Prostate gland (tissue), 2 donors: ENCODE measurements at regions of chr1 and their contacts with region 1.

Region 1: DNA sequence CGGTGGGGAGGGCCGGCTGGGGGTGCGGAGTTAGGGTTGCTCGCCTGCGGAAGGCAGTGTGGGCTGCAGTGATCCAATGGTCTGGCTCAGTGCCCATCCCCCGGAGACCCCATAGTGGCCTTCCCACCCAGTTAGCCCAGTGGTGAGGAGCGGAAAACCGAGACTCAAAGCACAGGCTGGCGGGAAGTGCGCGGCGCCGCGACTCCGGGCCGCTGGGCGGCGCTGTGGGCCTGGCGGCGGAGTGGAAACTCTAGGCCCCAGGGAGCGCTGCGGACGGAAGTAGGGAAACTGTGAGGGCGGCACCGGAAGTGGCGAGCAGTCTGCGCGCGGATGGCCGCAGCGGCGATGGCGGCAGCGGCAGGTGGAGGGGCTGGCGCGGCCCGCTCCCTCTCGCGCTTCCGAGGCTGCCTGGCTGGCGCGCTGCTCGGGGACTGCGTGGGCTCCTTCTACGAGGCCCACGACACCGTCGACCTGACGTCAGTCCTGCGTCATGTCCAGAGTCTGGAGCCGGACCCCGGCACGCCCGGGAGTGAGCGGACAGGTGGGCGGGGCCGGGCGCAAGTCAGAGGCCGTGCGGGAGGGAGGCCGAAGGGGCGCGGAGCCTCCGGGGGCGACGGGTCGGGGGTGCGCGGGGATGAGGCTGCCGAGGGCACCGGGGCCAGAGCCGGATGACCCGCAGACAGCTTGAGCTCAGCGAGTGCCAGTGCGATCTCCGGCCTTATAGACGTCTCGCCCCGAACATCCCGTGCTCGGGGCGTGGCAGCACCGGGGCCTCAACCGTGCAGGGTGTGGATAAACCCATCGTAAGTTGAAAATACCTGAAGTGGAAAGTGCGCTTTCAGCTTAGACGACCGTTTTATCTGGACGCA is at the start of gene ADPRS:
- DNase-seq: peak; percentile 84
- H3K4me3 ChIP-seq: peak within 1 kb of the TSS; percentile 57 to 89
- H3K27ac ChIP-seq: peak within 1 kb of the TSS; percentile 72 to 90
- H3K4me1 ChIP-seq: peaks cover 12% of the 10 kb centered on the region
- H3K27me3 ChIP-seq: no peaks in the 10 kb centered on the region
- CTCF ChIP-seq: peak; percentile 93 to 99 (median 99)
- POLR2A ChIP-seq: peak; percentile 84
- total RNA-seq, gene ADPRS: 50.7 to 70.0 TPM

Region 2: GRCh38 chr1:35882945-35883634 is 205.7 kb before region 1 on chr1 and contains the start of gene AGO1:
- intact Hi-C with region 1: loop called (anchors 5 kb)
- DNase-seq: peak; percentile 91
- H3K4me3 ChIP-seq: peak within 1 kb of the TSS; percentile 74 to 96
- H3K27ac ChIP-seq: peak within 1 kb of the TSS; percentile 79 to 83
- H3K4me1 ChIP-seq: peaks cover 3% of the 10 kb centered on the region
- H3K27me3 ChIP-seq: no peaks in the 10 kb centered on the region
- CTCF ChIP-seq: peak; percentile 94 to 99 (median 98)
- POLR2A ChIP-seq: peak; percentile 83
- total RNA-seq, gene AGO1: 31.8 to 52.0 TPM

Region 3: GRCh38 chr1:35930593-35931445 is 158.0 kb before region 1 on chr1 and contains the start of gene AGO3:
- intact Hi-C with region 1: loop called (anchors 2 kb)
- DNase-seq: peak; percentile 78
- H3K4me3 ChIP-seq: peak within 1 kb of the TSS; percentile 79
- H3K27ac ChIP-seq: peak within 1 kb of the TSS; percentile 97
- H3K4me1 ChIP-seq: no peaks in the 10 kb centered on the region
- H3K27me3 ChIP-seq: no peaks in the 10 kb centered on the region
- CTCF ChIP-seq: peak in 1 of 4 experiments; percentile 2
- POLR2A ChIP-seq: peak; percentile 67
- total RNA-seq, gene AGO3: 19.4 to 32.7 TPM